ENCODE measurements at regions of chr4 and their contacts with region 1.

Region 1: GRCh38 chr4:55395529-55396307 is at the start of gene TMEM165:
- DNase-seq: peak; percentile 94
- ATAC-seq: peak; percentile 91
- H3K4me3 ChIP-seq: peak within 1 kb of the TSS; percentile 67 to 94 (median 77)
- H3K4me3 Mint-ChIP-seq: peak within 1 kb of the TSS; percentile 97
- H3K27ac ChIP-seq: peak within 1 kb of the TSS; percentile 91 to 93
- H3K27ac Mint-ChIP-seq: peak within 1 kb of the TSS; percentile 97
- H3K4me1 ChIP-seq: peaks cover 28 to 33% of the 10 kb centered on the region in 2 donors
- H3K4me1 Mint-ChIP-seq: peaks cover 39% of the 10 kb centered on the region
- H3K27me3 ChIP-seq: no peaks in the 10 kb centered on the region
- H3K27me3 Mint-ChIP-seq: no peaks in the 10 kb centered on the region
- CTCF ChIP-seq: no peak
- total RNA-seq, gene TMEM165: 110 and 113 TPM in 2 replicates

Region 2: GRCh38 chr4:54064295-54065111 is 1331.2 kb before region 1 on chr4 and contains the start of gene CHIC2:
- CTCF ChIA-PET with region 1: no interaction called
- POLR2A ChIA-PET with region 1: no interaction called
- intact Hi-C with region 1: loop called (anchors 5 kb)
- DNase-seq: peak; percentile 98
- ATAC-seq: peak; percentile 89
- H3K4me3 ChIP-seq: peak within 1 kb of the TSS; percentile 77 to 99 (median 89)
- H3K4me3 Mint-ChIP-seq: peak within 1 kb of the TSS; percentile 95
- H3K27ac ChIP-seq: peak within 1 kb of the TSS; percentile 79 to 98
- H3K27ac Mint-ChIP-seq: peak within 1 kb of the TSS; percentile 95
- H3K4me1 ChIP-seq: peaks cover 17 to 33% of the 10 kb centered on the region in 2 donors
- H3K4me1 Mint-ChIP-seq: peaks cover 39% of the 10 kb centered on the region
- H3K27me3 ChIP-seq: no peaks in the 10 kb centered on the region
- H3K27me3 Mint-ChIP-seq: no peaks in the 10 kb centered on the region
- CTCF ChIP-seq: no peak
- total RNA-seq, gene CHIC2: 34.9 and 37.7 TPM in 2 replicates

Region 3: DNA sequence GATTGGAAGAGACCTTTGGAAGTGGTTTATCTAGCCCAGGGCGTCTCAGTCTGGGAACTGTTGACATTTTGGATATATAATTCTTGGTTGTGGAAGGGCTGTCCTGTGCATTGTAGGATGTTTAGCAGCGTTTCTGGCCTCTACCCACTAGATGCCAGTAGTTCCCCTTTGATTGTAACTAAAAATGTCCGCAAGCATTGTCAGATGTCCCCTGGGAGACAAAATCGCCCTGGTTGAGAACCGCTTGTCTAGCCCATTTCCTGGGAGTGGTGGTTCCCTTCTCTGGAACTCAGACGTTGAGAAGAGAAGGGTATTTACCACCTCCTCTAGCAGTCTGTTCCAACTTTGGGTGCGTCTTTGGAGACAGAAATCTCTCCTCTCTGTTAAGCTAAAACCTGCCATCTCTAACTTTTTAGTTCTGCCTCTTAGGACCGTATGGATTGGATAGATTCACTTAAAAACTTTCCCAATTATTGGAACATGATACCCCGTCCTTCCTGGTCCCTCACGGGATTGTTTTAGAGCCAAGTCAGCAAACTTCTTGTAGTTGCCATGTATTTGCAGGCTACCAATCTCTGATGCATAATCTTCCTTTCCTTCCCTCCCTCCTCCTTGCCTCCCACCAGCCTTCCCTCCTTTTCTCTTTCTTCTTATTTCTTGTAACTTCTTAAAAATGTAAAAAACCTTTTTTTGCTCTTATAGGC is 13.9 kb after region 1 on chr4:
- CTCF ChIA-PET with region 1: interaction called, 20 read pairs
- POLR2A ChIA-PET with region 1: no interaction called
- intact Hi-C with region 1: loop called (anchors 1 kb)
- DNase-seq: peak; percentile 85
- ATAC-seq: peak; percentile 93
- H3K4me3 ChIP-seq: no peak overlapping the region
- H3K4me3 Mint-ChIP-seq: peak overlapping the region; percentile 36
- H3K27ac ChIP-seq: peak overlapping the region in 1 of 2 donors; percentile 77
- H3K27ac Mint-ChIP-seq: peak overlapping the region; percentile 71
- H3K4me1 ChIP-seq: peaks cover 14% of the 10 kb centered on the region in 2 donors
- H3K4me1 Mint-ChIP-seq: peaks cover 30% of the 10 kb centered on the region
- H3K27me3 ChIP-seq: no peaks in the 10 kb centered on the region
- H3K27me3 Mint-ChIP-seq: no peaks in the 10 kb centered on the region
- CTCF ChIP-seq: peak; percentile 73

Region 4: GRCh38 chr4:56387023-56388001 is 991.6 kb after region 1 on chr4 and contains the start of gene AASDH:
- CTCF ChIA-PET with region 1: no interaction called
- POLR2A ChIA-PET with region 1: no interaction called
- intact Hi-C with region 1: loop called (anchors 1 kb)
- DNase-seq: peak; percentile 97
- ATAC-seq: peak; percentile 94
- H3K4me3 ChIP-seq: peak within 1 kb of the TSS; percentile 57 to 97 (median 81)
- H3K4me3 Mint-ChIP-seq: peak within 1 kb of the TSS; percentile 88
- H3K27ac ChIP-seq: peak within 1 kb of the TSS; percentile 86 to 89
- H3K27ac Mint-ChIP-seq: peak within 1 kb of the TSS; percentile 99
- H3K4me1 ChIP-seq: peaks cover 14% of the 10 kb centered on the region in 2 donors
- H3K4me1 Mint-ChIP-seq: peaks cover 30% of the 10 kb centered on the region
- H3K27me3 ChIP-seq: no peaks in the 10 kb centered on the region
- H3K27me3 Mint-ChIP-seq: no peaks in the 10 kb centered on the region
- CTCF ChIP-seq: no peak
- total RNA-seq, gene AASDH: 15.2 and 17.2 TPM in 2 replicates

Region 5: DNA sequence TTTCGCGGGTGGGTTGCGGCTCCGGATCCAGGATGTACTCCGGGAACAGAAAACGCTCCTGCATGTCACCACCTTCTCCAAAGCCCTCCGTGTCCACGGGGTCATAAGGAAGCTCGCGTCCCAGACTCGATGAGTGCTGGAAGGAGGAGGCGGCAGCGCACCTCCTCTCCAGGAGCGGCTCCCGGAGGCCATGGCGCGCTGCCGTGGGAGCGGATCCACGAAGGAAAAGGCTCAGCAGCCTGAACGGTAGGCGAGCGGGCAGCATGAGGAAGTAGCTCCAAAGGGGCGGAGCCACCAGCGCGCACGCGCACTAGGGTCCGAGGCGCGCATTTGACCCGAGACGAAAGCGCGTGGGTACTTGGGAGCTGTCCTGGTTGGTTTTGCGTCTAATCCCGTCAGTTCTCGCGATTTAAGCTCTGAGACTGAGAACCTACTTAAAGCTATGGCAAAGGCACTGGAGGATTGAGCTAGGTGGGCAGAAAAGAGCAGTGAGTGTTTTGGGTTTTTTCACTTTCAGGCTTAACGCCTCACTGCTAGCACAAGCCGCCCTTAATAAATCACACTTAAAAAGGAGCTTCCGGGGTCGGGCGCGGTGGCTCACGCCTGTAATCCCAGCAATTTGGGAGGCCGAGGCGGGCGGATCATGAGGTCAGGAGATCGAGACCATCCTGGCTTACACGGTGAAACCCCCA is 1581.7 kb after region 1 on chr4 and contains the start of gene NOA1:
- CTCF ChIA-PET with region 1: interaction called, 3 read pairs
- POLR2A ChIA-PET with region 1: no interaction called
- intact Hi-C with region 1: loop called (anchors 5 kb)
- DNase-seq: peak; percentile 99
- ATAC-seq: peak; percentile 82
- H3K4me3 ChIP-seq: peak within 1 kb of the TSS; percentile 74 to 95 (median 91)
- H3K4me3 Mint-ChIP-seq: peak within 1 kb of the TSS; percentile 100
- H3K27ac ChIP-seq: peak within 1 kb of the TSS; percentile 73 to 84
- H3K27ac Mint-ChIP-seq: peak within 1 kb of the TSS; percentile 98
- H3K4me1 ChIP-seq: peaks cover 35 to 40% of the 10 kb centered on the region in 2 donors
- H3K4me1 Mint-ChIP-seq: peaks cover 57% of the 10 kb centered on the region
- H3K27me3 ChIP-seq: no peaks in the 10 kb centered on the region
- H3K27me3 Mint-ChIP-seq: no peaks in the 10 kb centered on the region
- CTCF ChIP-seq: no peak
- total RNA-seq, gene NOA1: 22.7 and 24.0 TPM in 2 replicates

Measured in B cell (primary cell).